ENCODE measurements at regions of chr12 and their contacts with region 1.

Region 1: GRCh38 chr12:62813031-62813829 is 121.7 kb downstream of the PPM1H start:
- DNase-seq: peak; percentile 31 to 57
- H3K4me3 ChIP-seq: no peak overlapping the region
- H3K27ac ChIP-seq: no peak overlapping the region
- H3K4me1 ChIP-seq: peaks cover 0 to 6% (median 2%) of the 10 kb centered on the region in 4 experiments; a peak in 3 of 7 replicates
- H3K27me3 ChIP-seq: no peaks in the 10 kb centered on the region
- CTCF ChIP-seq: peak; percentile 80 to 91 (median 88)
- EP300 ChIP-seq: no peak
- POLR2A ChIP-seq: no peak
- RAD21 ChIP-seq: peak; percentile 82 to 85

Region 2: GRCh38 chr12:62435303-62436163 is 377.7 kb before region 1 on chr12:
- CTCF ChIA-PET with region 1: interaction called, 28 read pairs
- POLR2A ChIA-PET with region 1: no interaction called
- DNase-seq: peak; percentile 31 to 75
- H3K4me3 ChIP-seq: peak overlapping the region; percentile 37 to 71 (median 67)
- H3K27ac ChIP-seq: no peak overlapping the region
- H3K4me1 ChIP-seq: peaks cover 0 to 5% (median 0%) of the 10 kb centered on the region in 4 experiments; a peak in 4 of 7 replicates
- H3K27me3 ChIP-seq: peaks cover 8 to 25% (median 19%) of the 10 kb centered on the region in 4 experiments
- CTCF ChIP-seq: peak; percentile 54 to 79 (median 77)
- EP300 ChIP-seq: no peak
- POLR2A ChIP-seq: no peak
- RAD21 ChIP-seq: peak; percentile 48 to 58

Region 3: GRCh38 chr12:62581288-62582064 is 231.8 kb before region 1 on chr12:
- CTCF ChIA-PET with region 1: interaction called, 35 read pairs
- POLR2A ChIA-PET with region 1: no interaction called
- DNase-seq: no peak
- H3K4me3 ChIP-seq: no peak overlapping the region
- H3K27ac ChIP-seq: no peak overlapping the region
- H3K4me1 ChIP-seq: no peaks in the 10 kb centered on the region
- H3K27me3 ChIP-seq: no peaks in the 10 kb centered on the region
- CTCF ChIP-seq: peak in 2 of 3 experiments; percentile 46 to 56; a peak in 2 of 4 replicates
- EP300 ChIP-seq: no peak
- POLR2A ChIP-seq: no peak
- RAD21 ChIP-seq: peak; percentile 73 to 74

Region 4: DNA sequence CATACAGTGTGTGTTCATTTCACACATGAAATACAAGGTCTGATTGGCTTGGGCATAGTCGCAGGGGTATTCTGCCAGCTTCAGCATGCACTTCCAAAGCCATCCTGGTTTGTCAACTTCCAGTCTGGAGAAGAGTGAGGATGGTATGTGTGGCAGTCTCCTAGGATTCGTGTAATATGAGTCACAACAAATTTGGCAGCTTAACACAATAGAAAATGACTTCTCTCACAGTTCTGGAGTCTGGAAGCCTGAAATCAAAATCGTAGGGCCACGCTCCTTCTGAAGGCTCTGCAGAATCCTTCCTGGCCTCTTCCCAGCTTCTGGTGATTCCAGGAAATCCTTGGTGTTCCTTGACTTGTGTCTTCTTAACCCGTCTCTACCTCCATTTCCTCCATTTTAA is 45.7 kb before region 1 on chr12:
- CTCF ChIA-PET with region 1: no interaction called
- POLR2A ChIA-PET with region 1: no interaction called
- DNase-seq: no peak
- H3K4me3 ChIP-seq: no peak overlapping the region
- H3K27ac ChIP-seq: no peak overlapping the region
- H3K4me1 ChIP-seq: peaks cover 5 to 14% (median 11%) of the 10 kb centered on the region in 4 experiments; a peak in 6 of 7 replicates
- H3K27me3 ChIP-seq: no peaks in the 10 kb centered on the region
- CTCF ChIP-seq: no peak
- EP300 ChIP-seq: no peak
- POLR2A ChIP-seq: no peak
- RAD21 ChIP-seq: no peak

Region 5: DNA sequence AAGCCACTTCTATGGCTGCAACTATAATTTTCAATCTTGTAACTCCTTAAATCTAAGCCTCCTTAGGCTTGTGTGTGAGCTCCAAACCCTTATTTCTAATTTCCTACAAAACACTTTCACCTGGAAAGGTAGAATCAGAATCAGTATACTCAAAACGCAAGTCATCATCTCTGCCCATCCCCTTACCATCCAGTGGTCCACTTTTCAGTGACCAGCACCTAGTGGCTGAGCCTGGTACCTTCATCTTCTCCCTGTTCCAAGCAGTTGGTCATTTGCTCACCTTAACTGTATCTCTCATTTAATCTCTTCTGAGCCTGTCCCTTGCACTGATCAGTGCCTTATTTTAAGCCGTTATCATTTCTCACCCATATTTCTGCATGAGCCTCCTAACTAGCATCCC is 13.8 kb after region 1 on chr12:
- CTCF ChIA-PET with region 1: interaction called, 16 read pairs
- POLR2A ChIA-PET with region 1: no interaction called
- DNase-seq: no peak
- H3K4me3 ChIP-seq: no peak overlapping the region
- H3K27ac ChIP-seq: no peak overlapping the region
- H3K4me1 ChIP-seq: no peaks in the 10 kb centered on the region
- H3K27me3 ChIP-seq: no peaks in the 10 kb centered on the region
- CTCF ChIP-seq: peak; percentile 18 to 60 (median 45); a peak in 3 of 4 replicates
- EP300 ChIP-seq: no peak
- POLR2A ChIP-seq: no peak
- RAD21 ChIP-seq: peak; percentile 11 to 16; a peak in 3 of 4 replicates

Region 6: DNA sequence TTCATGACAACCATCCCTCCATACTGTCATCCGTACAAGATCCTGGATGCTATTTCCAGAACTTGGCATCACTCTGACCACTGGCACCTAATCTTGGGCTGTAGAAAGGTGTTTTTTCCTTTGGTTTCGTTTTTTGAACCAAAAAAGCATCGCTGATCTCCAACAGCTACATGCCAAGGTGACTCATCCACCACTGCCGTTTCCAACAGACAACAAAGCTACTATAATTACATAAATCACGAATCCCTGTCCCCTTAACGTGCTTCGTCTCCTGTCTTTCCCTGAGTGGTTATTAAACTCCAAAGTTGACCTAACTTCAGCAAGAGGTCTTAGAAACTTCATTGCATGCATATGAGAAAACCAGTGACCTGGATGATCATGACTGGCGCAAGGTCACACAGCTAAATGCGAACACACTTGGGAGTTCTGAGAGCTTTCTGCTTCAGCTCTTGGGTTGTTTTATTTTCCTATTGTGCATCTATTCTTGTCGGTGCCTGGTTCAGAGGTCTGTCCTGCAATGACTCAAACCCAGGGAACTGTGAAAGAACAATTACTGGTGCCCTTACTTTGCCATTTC is 21.8 kb after region 1 on chr12:
- CTCF ChIA-PET with region 1: interaction called, 14 read pairs
- POLR2A ChIA-PET with region 1: no interaction called
- DNase-seq: no peak
- H3K4me3 ChIP-seq: no peak overlapping the region
- H3K27ac ChIP-seq: no peak overlapping the region
- H3K4me1 ChIP-seq: peaks cover 0 to 3% (median 1%) of the 10 kb centered on the region in 4 experiments; a peak in 2 of 7 replicates
- H3K27me3 ChIP-seq: no peaks in the 10 kb centered on the region
- CTCF ChIP-seq: no peak
- EP300 ChIP-seq: no peak
- POLR2A ChIP-seq: no peak
- RAD21 ChIP-seq: no peak

Region 7: GRCh38 chr12:62983599-62984022 is 170.4 kb after region 1 on chr12:
- CTCF ChIA-PET with region 1: interaction called, 14 read pairs
- POLR2A ChIA-PET with region 1: no interaction called
- DNase-seq: peak in 1 of 2 experiments; percentile 2
- H3K4me3 ChIP-seq: no peak overlapping the region
- H3K27ac ChIP-seq: no peak overlapping the region
- H3K4me1 ChIP-seq: no peaks in the 10 kb centered on the region
- H3K27me3 ChIP-seq: no peaks in the 10 kb centered on the region
- CTCF ChIP-seq: peak; percentile 32 to 54 (median 41); a peak in 3 of 4 replicates
- EP300 ChIP-seq: no peak
- POLR2A ChIP-seq: no peak
- RAD21 ChIP-seq: peak; percentile 55 to 68